ENCODE measurements at regions of chr20 and their contacts with region 1.

Region 1: GRCh38 chr20:46757754-46758678 is 48.6 kb downstream of the SLC2A10 start:
- DNase-seq: peak; percentile 76 to 81 (median 79)
- ATAC-seq: peak; percentile 84
- H3K4me3 ChIP-seq: no peak overlapping the region
- H3K27ac ChIP-seq: no peak overlapping the region
- H3K4me1 ChIP-seq: peaks cover 0 to 4% of the 10 kb centered on the region in 2 experiments; a peak in 2 of 5 replicates
- H3K27me3 ChIP-seq: peaks cover 6 to 18% of the 10 kb centered on the region in 2 experiments; a peak in 3 of 5 replicates
- CTCF ChIP-seq: peak; percentile 76 to 91 (median 87)
- EP300 ChIP-seq: no peak
- POLR2A ChIP-seq: no peak
- RAD21 ChIP-seq: peak; percentile 48 to 78

Region 2: GRCh38 chr20:46363800-46364634 is 394.0 kb before region 1 on chr20:
- CTCF ChIA-PET with region 1: no interaction called
- POLR2A ChIA-PET with region 1: no interaction called
- in situ Hi-C with region 1: no loop called
- intact Hi-C with region 1: no loop called
- DNase-seq: peak; percentile 88 to 93 (median 92)
- ATAC-seq: peak; percentile 98
- H3K4me3 ChIP-seq: peak overlapping the region; percentile 79
- H3K27ac ChIP-seq: peak overlapping the region; percentile 90
- H3K4me1 ChIP-seq: peaks cover 16 to 25% of the 10 kb centered on the region in 2 experiments
- H3K27me3 ChIP-seq: no peaks in the 10 kb centered on the region
- CTCF ChIP-seq: no peak
- EP300 ChIP-seq: no peak; the same call in 1 of the 2 replicates
- POLR2A ChIP-seq: peak; percentile 96
- RAD21 ChIP-seq: no peak

Region 3: GRCh38 chr20:46784436-46785127 is 26.6 kb after region 1 on chr20:
- CTCF ChIA-PET with region 1: no interaction called
- POLR2A ChIA-PET with region 1: no interaction called
- in situ Hi-C with region 1: no loop called
- intact Hi-C with region 1: no loop called
- DNase-seq: no peak
- ATAC-seq: no peak
- H3K4me3 ChIP-seq: no peak overlapping the region
- H3K27ac ChIP-seq: no peak overlapping the region
- H3K4me1 ChIP-seq: no peaks in the 10 kb centered on the region; a peak in 1 of 5 replicates
- H3K27me3 ChIP-seq: peaks cover 2 to 38% of the 10 kb centered on the region in 2 experiments; a peak in 2 of 5 replicates
- CTCF ChIP-seq: no peak
- EP300 ChIP-seq: no peak
- POLR2A ChIP-seq: no peak
- RAD21 ChIP-seq: no peak

Region 4: DNA sequence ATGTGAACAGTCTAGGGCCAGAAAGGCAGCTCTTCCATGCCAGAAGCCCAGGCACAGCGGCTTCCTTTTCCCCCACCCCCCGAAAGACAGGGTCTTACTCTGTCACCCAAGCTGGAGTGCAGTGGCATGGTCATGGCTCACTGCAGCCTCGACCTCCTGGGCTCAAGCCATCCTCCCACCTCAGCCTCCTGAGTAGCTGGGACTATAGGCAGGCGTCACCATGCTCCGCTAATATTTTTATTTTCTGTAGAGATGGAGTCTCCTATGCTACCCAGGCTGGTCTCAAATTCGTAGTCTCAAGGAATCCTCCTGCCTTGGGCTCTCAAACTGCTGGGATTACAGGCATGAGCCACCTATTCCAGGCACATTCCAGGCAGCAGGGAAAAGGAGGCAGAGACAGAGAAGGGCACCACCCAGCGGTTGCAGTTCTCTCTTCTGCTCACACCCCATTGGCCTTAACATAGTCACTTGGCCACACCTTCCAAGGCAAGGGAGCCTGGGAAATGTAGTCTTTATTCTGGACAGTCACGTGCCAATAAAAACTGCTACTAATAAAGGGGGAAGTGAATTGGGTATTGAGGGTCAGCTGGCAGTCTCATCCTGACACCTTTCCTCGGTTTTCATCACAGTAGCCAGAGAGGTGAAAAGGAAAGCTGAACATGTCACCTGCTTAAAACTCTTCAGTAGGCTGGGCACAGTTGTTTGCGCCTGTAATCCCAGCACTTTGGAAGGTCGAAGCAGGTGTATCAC is 392.6 kb after region 1 on chr20:
- CTCF ChIA-PET with region 1: interaction called, 3 read pairs
- POLR2A ChIA-PET with region 1: no interaction called
- in situ Hi-C with region 1: loop called (anchors 10 kb)
- intact Hi-C with region 1: loop called (anchors 1 kb)
- DNase-seq: peak; percentile 74 to 83 (median 79)
- ATAC-seq: peak; percentile 100
- H3K4me3 ChIP-seq: no peak overlapping the region
- H3K27ac ChIP-seq: no peak overlapping the region
- H3K4me1 ChIP-seq: no peaks in the 10 kb centered on the region
- H3K27me3 ChIP-seq: peaks cover 22 to 47% of the 10 kb centered on the region in 2 experiments
- CTCF ChIP-seq: peak; percentile 75 to 86 (median 82)
- EP300 ChIP-seq: no peak
- POLR2A ChIP-seq: no peak
- RAD21 ChIP-seq: peak; percentile 43 to 79

Region 5: GRCh38 chr20:47392015-47392720 is 634.2 kb after region 1 on chr20:
- CTCF ChIA-PET with region 1: no interaction called
- POLR2A ChIA-PET with region 1: no interaction called
- in situ Hi-C with region 1: loop called (anchors 25 kb)
- intact Hi-C with region 1: no loop called
- DNase-seq: peak; percentile 71 to 92 (median 80)
- ATAC-seq: peak; percentile 98
- H3K4me3 ChIP-seq: no peak overlapping the region
- H3K27ac ChIP-seq: peak overlapping the region; percentile 95
- H3K4me1 ChIP-seq: peaks cover 8 to 24% of the 10 kb centered on the region in 2 experiments; a peak in 4 of 5 replicates
- H3K27me3 ChIP-seq: no peaks in the 10 kb centered on the region
- CTCF ChIP-seq: no peak
- EP300 ChIP-seq: peak; percentile 71; the same call in 1 of the 2 replicates
- POLR2A ChIP-seq: peak; percentile 69; the same call in 1 of the 2 replicates
- RAD21 ChIP-seq: no peak